IMR-90 (cell line): ENCODE measurements at regions of chr4 and their contacts with region 1.

Region 1: GRCh38 chr4:22688236-22688635 is 4.5 kb upstream of the GBA3 start:
- DNase-seq: no peak
- ATAC-seq: no peak
- H3K4me3 ChIP-seq: no peak overlapping the region
- H3K27ac ChIP-seq: no peak overlapping the region
- H3K4me1 ChIP-seq: no peaks in the 10 kb centered on the region
- H3K27me3 ChIP-seq: peaks cover 2% of the 10 kb centered on the region; the same call in 1 of the 2 replicates
- CTCF ChIP-seq: no peak
- POLR2A ChIP-seq: no peak
- RAD21 ChIP-seq: no peak

Region 2: GRCh38 chr4:22410645-22411247 is 277.5 kb before region 1 on chr4:
- CTCF ChIA-PET with region 1: no interaction called
- POLR2A ChIA-PET with region 1: no interaction called
- dilution Hi-C with region 1: no loop called
- in situ Hi-C with region 1: loop called (anchors 5 kb)
- intact Hi-C with region 1: loop called (anchors 1 kb)
- DNase-seq: peak; percentile 33
- ATAC-seq: 0 out of 2 replicates have a peak, but pooled peaks have one; percentile 14
- H3K4me3 ChIP-seq: no peak overlapping the region
- H3K27ac ChIP-seq: no peak overlapping the region
- H3K4me1 ChIP-seq: no peaks in the 10 kb centered on the region
- H3K27me3 ChIP-seq: no peaks in the 10 kb centered on the region
- CTCF ChIP-seq: peak; percentile 62
- POLR2A ChIP-seq: no peak
- RAD21 ChIP-seq: peak; percentile 57

Region 3: DNA sequence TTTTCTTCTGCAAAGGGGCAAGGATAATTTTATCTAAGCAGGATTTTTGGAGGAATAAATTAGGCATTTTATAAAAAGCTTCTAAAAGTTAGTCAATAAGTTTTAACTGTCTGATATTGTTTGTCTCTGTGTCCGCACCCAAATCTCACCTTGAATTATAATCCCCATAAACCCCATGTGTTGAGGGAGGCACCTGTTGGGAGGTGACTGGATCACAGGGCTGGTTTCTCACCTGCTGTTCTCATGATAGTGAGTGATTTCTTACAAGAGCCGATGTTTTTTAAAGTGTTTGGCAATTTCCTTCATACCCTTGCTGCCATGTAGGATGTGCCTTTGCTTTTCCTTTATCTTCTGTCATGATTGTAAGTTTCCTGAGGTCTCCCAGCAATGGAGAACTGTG is 485.9 kb after region 1 on chr4:
- CTCF ChIA-PET with region 1: no interaction called
- POLR2A ChIA-PET with region 1: no interaction called
- dilution Hi-C with region 1: no loop called
- in situ Hi-C with region 1: no loop called
- intact Hi-C with region 1: no loop called
- DNase-seq: no peak
- ATAC-seq: no peak
- H3K4me3 ChIP-seq: no peak overlapping the region
- H3K27ac ChIP-seq: no peak overlapping the region
- H3K4me1 ChIP-seq: no peaks in the 10 kb centered on the region
- H3K27me3 ChIP-seq: no peaks in the 10 kb centered on the region
- CTCF ChIP-seq: no peak
- POLR2A ChIP-seq: no peak
- RAD21 ChIP-seq: no peak